ENCODE measurements at regions of chr15 and their contacts with region 1.

Region 1: GRCh38 chr15:75453703-75454470 is 2.4 kb upstream of the SIN3A start:
- DNase-seq: peak; percentile 96 to 100 (median 98)

Region 2: DNA sequence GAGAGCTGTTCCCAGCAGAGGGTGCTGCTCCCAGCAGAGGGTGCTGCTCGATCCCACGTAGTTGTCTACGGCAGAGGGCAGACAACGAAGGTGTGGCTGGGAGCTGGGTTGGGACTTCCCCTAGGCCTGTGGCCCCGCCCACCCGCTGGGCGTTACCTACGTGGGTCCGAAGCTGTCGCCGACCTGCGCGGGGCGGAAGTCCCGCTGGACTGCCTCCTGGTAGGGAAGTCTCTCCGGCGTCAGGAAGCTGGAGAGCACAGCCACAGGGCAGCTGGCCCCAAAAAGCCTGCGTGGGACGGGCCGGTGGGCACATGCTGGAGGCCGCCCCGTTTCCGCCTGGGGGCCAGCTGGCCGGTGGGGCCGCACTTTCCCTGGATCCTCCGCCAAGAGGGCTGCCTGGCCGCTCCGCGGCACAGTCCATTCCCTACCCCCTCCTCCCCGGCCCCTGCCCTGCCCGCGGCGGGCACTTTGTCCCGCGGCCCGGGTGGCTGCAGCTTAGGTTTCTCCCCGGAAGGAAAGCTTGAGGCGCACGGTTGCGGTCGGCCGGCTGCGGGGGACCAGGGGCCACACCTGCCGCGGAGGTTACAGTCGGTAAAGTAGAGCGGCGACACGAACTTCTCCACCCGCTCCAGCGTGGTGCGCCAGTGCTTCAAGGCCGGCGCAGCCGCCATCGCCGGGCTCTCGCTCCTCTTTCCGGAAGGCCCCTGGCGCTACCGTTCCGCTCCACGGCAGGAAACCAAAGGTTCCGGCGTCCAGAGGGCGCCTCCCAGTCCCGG is 85.8 kb before region 1 on chr15 and contains the start of gene MAN2C1:
- intact Hi-C with region 1: loop called (anchors 2 kb)
- DNase-seq: peak; percentile 82 to 97 (median 92)

Region 3: DNA sequence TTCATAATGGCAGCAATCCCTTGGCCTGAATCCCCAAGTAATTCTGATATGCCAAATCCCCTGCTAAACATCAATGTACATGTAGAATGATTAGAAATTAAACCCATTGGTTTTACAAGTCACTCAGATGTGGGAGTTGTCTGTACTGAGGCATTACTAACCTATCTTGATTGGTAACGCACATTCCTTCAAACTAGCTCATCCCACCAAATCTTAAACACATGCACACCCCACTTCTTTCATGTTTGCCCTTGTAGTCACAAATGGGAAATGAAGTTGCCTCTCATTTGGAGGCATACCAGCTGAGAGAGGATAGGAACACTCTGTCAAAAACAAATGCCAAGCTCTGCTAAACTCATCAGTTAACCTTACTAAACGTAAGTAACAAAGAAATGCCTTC is 56.4 kb before region 1 on chr15:
- intact Hi-C with region 1: no loop called
- DNase-seq: no peak

Region 4: DNA sequence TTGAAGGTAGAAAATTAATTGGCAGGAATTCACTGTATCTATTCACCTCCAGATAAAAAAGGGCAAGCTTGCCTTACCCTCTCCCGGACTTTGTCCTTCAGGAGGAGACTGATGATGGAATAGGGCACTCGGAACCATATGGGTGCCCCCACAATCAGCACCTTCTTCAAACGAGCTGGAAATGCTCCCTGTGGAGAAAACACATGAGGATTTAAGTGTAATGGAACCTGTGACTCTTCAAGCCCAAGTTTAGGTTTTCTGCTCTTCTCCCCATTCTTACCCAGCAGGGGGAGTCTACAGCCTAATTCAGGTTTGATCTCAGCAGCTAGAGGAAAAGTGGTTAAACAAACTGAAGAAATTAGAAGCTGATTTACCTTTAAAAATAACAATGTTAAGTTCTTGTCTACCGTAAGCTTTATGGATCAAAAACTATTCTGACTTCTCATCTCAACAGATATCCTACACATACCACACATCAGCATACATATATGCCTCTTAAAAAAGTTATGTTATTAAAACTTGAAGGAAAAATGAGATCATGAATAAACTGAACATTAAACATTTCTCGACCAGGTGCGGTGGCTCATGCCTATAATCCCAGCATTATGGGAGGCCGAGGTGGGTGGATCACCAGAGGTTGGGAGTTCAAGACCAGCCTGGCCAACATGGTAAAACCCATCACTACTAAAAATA is 55.1 kb after region 1 on chr15:
- intact Hi-C with region 1: no loop called
- DNase-seq: peak in 11 of 42 donors; percentile 17 to 49 (median 29)

Region 5: GRCh38 chr15:75578948-75579920 is 125.3 kb after region 1 on chr15 and contains the start of gene PTPN9:
- intact Hi-C with region 1: loop called (anchors 10 kb)
- DNase-seq: peak; percentile 62 to 93 (median 81)

Region 6: DNA sequence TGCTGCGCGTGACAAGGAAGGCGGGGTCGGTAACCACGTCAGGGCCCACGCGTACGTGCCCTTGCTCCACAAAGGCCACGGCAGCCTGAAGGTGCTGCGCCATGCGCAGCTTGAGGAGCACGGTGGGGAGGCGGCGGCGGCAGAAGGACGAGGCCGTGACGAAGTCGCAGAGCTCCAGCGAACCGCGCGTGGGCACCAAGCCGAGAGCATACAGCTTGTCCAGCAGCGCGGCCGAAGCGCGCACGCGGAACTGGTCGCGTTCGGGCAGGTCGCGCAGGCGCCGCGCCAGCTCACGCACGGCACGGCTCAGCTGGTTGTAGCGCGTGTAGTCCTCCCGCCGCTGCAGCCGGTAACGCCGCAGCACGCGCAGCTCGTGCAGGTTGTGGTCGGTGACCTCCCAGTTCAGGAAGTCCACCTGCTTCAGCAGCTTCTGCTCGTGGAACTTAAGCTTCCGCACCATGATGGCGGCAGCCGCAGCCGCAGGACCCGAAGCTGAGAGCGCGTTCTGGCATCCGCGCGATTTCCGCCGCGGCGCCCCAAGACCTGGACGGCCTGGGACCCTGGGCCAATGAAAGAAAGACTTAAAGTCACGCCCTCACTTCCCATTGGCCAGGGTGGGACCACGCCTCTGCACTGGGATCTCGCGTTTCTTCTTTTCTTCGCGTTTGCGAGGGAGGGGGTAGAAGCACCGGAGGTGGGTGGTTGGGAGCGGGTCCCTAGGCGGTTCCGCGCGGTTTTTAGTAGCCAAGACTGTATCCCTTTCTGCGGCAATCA is 186.0 kb after region 1 on chr15 and contains the start of gene IMP3:
- intact Hi-C with region 1: loop called (anchors 10 kb)
- DNase-seq: peak; percentile 93 to 99 (median 97)

Measured in head of caudate nucleus (tissue), 42 donors.